Panc1 (cell line): ENCODE measurements at regions of chr4 and their contacts with region 1.

Region 1: GRCh38 chr4:18689308-18690115 is 668.0 kb upstream of the LCORL start:
- DNase-seq: peak; percentile 28
- ATAC-seq: no peak
- H3K4me3 ChIP-seq: no peak overlapping the region
- H3K27ac ChIP-seq: no peak overlapping the region
- H3K4me1 ChIP-seq: no peaks in the 10 kb centered on the region
- H3K27me3 ChIP-seq: no peaks in the 10 kb centered on the region
- CTCF ChIP-seq: peak; percentile 73; the same call in 1 of the 2 replicates

Region 2: GRCh38 chr4:18815779-18816173 is 126.3 kb after region 1 on chr4:
- CTCF ChIA-PET with region 1: no interaction called
- POLR2A ChIA-PET with region 1: no interaction called
- in situ Hi-C with region 1: no loop called
- intact Hi-C with region 1: no loop called
- DNase-seq: no peak
- ATAC-seq: no peak
- H3K4me3 ChIP-seq: no peak overlapping the region
- H3K27ac ChIP-seq: no peak overlapping the region
- H3K4me1 ChIP-seq: no peaks in the 10 kb centered on the region
- H3K27me3 ChIP-seq: no peaks in the 10 kb centered on the region
- CTCF ChIP-seq: no peak

Region 3: DNA sequence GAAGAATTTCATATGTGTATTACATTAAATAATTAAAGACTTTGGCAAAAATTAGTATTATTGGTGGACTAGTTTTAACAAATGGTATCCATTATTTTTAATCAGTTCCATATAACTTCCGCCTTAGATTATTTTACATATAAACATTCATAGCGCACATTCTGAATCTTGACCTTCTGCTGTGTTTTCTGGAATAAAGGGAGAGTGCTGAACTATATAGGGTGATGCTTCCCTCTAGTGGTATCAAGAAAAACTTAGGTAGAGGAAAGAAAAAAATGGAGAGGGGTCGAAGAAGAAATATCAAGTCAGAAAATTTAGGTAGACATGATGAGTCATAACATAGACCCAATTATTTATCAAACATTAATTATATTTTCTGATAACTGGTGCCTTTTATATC is 1855.1 kb after region 1 on chr4:
- CTCF ChIA-PET with region 1: no interaction called
- POLR2A ChIA-PET with region 1: no interaction called
- in situ Hi-C with region 1: no loop called
- intact Hi-C with region 1: loop called (anchors 5 kb)
- DNase-seq: no peak
- ATAC-seq: no peak
- H3K4me3 ChIP-seq: no peak overlapping the region
- H3K27ac ChIP-seq: no peak overlapping the region
- H3K4me1 ChIP-seq: no peaks in the 10 kb centered on the region
- H3K27me3 ChIP-seq: no peaks in the 10 kb centered on the region
- CTCF ChIP-seq: peak; percentile 50; the same call in 1 of the 2 replicates

Region 4: DNA sequence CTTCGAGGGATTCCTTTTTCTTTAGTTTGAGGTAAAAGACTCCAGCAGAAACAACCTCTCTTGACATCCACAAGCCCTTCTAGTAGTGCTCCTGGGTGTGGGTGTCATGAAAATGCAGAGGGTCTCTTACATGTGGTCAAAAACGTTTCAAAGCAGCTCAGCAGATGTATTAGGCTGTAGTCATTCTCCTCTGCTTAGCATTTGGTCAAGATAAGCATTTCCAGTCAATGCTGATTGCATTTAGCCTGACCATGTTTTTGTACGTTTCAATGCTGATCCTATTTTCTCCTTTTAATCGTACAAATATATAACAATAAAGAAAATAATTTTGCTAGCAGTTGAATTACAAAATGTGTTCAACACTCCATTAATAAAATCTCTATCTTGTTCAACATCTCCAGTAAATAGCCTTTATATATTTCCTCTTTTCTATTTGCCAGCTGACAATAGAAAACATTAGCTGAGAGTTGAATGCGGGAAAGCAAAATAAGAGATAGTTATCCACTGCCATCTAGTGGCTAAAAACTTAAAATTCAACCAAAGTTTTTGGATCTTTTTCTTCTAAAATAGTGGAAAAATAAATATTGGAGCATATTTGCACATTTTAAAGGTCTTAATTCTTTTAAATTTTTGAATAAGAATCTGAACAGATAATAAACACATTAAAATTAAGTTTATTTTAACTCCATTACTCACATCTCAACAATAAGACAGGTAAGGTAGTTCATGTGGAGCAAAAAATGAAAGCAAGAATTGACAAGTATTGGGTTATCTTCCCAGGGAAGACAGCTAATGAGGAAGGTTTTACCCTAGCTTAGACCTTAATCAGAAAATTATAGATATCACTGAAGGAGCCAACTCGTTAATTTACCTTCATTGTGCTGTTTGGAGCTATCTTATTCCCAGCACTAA is 1995.6 kb after region 1 on chr4:
- CTCF ChIA-PET with region 1: no interaction called
- POLR2A ChIA-PET with region 1: no interaction called
- in situ Hi-C with region 1: no loop called
- intact Hi-C with region 1: loop called (anchors 10 kb)
- DNase-seq: no peak
- ATAC-seq: no peak
- H3K4me3 ChIP-seq: no peak overlapping the region
- H3K27ac ChIP-seq: no peak overlapping the region
- H3K4me1 ChIP-seq: no peaks in the 10 kb centered on the region
- H3K27me3 ChIP-seq: no peaks in the 10 kb centered on the region
- CTCF ChIP-seq: peak; percentile 58; the same call in 1 of the 2 replicates